Activated T-helper 1 cell treated with anti-CD3 and anti-CD28 coated beads, Interleukin-12 subunit alpha, Interleukin-12 subunit beta, Interleukin-2, Interleukin-4 antibody, amounts not matched to agents 30 ng/mL and 10 ng/mL and 1 ng/mL, durations not matched to agents 14 hours and 24 hours and 36 hours (primary cell): ENCODE measurements at regions of chr1 and their contacts with region 1.

Region 1: DNA sequence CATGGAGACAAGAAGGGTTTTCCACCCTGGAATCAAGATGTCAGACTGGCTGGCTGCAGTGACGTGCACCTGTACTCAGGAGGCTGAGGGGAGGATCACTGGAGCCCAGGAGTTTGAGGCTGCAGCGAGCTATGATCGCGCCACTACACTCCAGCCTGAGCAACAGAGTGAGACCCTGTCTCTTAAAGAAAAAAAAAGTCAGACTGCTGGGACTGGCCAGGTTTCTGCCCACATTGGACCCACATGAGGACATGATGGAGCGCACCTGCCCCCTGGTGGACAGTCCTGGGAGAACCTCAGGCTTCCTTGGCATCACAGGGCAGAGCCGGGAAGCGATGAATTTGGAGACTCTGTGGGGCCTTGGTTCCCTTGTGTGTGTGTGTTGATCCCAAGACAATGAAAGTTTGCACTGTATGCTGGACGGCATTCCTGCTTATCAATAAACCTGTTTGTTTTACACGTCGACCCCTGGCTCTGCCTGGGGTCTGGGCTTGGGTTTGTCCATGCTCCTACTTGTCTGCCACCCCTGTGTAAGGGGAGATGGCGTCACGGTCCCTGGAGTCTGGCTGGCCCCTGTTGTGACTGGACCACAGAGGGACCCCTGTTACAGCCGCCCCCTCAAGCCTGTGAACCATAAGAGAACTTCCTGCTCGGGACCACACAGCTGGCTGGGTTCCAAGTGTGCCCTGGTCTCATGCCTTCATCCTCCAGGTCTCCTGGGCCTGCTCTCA is 20.9 kb upstream of the VPS13D start:
- DNase-seq: peak; percentile 65
- H3K4me3 Mint-ChIP-seq: no peak overlapping the region
- H3K27ac Mint-ChIP-seq: peak overlapping the region; percentile 79
- H3K4me1 Mint-ChIP-seq: peaks cover 40% of the 10 kb centered on the region
- H3K27me3 Mint-ChIP-seq: peaks cover 3% of the 10 kb centered on the region

Region 2: DNA sequence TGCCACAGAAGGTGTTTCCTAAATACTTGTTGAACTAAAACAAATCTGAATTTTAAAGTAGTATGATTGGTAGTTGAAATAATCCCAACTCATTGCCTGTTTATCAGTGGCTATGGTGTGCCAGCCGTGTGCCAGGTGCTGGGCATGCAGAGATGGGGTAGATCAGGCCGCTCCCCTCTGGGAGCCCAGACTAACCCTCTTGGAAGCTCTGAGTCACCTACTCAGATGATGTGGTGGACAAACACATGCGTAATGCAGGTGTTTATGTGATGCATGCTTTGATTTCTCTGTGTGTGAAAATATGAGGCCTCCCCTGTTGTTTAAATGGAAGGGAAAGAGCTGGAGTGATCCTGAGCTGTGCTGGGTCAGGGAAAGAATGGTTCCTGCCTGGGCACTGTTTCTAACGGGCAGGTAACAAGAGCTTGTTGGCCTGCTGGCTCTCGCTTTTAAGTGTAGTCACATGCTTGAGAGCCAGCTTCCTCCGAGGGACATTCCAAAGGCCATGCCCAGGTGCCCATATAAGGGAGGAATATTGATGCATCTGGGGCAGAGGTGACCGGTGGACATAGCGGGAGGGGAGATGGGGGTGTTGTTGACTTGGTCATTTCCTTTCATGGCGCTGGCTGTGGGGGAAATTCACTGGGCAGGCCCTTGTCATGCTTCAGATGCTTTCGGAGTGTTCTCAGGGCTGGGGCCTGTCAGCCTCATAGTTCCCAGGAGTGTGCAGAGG is 218.5 kb before region 1 on chr1:
- intact Hi-C with region 1: no loop called
- DNase-seq: no peak
- H3K4me3 Mint-ChIP-seq: no peak overlapping the region
- H3K27ac Mint-ChIP-seq: no peak overlapping the region
- H3K4me1 Mint-ChIP-seq: peaks cover 22% of the 10 kb centered on the region
- H3K27me3 Mint-ChIP-seq: no peaks in the 10 kb centered on the region

Region 3: DNA sequence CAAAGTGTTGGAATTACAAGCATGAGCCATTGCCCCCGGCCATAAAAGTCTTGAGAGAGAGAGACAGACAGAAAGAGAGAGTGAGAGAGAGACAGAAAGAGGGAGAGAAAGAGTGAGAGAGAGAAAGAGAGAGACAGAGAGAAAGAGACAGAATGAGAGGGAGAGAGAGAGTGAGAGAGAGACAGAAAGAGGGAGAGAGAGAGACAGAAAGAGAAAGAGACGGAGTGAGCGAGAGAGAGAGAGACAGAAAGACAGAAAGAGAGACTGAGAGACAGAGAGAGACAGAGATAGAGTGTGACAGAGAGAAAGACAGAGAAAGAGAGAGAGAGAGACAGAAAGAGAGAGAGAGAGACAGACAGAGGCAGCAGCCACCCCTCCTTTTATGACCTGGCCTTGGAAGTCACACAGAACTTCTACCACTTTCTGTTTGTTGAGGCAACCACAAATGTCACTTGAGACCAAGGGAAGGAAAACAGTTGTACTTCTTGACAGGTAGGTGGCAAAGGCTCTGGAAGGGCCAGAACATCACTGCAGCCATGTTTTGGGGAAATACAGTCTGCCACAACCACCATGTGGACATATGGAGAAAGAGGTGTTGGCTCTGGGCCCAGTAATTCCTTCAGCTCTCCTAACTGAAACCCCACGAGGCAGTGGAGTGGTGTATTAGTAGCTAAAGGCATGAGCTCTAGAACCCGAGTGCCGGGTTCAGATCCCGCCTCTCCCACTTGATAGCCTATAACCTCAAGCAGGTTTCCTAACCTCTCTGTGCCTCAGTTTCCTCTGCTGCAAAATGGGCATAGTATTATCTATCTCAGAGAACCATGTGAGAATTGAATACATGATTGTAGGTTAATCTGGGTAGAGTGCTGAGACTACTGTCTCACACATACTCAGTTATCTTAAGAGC is 95.2 kb before region 1 on chr1:
- intact Hi-C with region 1: loop called (anchors 1 kb)
- DNase-seq: peak; percentile 15
- H3K4me3 Mint-ChIP-seq: peak overlapping the region; percentile 40
- H3K27ac Mint-ChIP-seq: peak overlapping the region; percentile 87
- H3K4me1 Mint-ChIP-seq: peaks cover 23% of the 10 kb centered on the region
- H3K27me3 Mint-ChIP-seq: peaks cover 2% of the 10 kb centered on the region

Region 4: DNA sequence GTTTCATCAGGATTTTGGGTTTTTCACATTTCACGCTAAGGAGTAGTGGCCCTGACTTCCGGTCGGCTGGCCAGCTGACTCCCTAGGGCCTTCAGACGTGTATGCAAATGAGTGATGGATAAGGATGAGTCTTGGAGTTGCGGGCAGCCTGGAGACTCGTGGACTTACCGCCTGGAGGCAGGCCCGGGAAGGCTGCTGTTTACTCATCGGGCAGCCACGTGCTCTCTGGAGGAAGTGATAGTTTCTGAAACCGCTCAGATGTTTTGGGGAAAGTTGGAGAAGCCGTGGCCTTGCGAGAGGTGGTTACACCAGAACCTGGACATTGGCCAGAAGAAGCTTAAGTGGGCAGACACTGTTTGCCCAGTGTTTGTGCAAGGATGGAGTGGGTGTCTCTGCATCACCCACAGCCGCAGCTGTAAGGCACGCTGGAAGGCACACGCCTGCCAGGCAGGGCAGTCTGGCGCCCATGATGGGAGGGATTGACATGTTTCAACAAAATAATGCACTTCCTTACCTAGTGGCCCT is 65.2 kb before region 1 on chr1:
- intact Hi-C with region 1: no loop called
- DNase-seq: no peak
- H3K4me3 Mint-ChIP-seq: peak overlapping the region; percentile 43
- H3K27ac Mint-ChIP-seq: peak overlapping the region; percentile 63
- H3K4me1 Mint-ChIP-seq: peaks cover 51% of the 10 kb centered on the region
- H3K27me3 Mint-ChIP-seq: no peaks in the 10 kb centered on the region

Region 5: DNA sequence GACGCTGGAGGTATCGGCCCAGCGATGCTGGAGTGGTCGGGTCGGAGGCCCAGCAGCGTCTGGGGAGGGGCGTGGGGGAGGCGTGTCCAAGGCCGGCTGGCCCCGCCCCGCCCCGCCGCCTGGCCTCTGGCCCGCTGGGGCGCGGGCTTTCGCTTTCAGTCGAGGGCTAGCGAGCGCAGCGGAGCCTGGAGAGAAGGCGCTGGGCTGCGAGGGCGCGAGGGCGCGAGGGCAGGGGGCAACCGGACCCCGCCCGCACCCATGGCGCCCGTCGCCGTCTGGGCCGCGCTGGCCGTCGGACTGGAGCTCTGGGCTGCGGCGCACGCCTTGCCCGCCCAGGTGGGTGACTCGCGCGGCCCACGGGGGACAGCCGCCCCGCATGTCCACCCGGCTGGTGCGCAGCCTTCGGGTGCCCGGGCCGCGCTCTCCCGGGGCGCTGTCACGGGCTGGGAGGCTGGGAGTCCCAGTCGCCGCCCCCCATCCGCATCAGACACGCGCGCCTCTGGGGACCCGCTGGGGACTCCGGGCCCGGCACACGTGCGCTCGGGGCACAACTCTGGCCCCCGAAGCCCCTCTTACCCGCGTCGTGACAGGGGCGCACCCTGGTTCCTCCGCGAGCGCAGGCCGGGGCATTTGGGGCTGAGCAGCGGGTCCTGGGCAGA is 42.0 kb before region 1 on chr1 and contains the start of gene TNFRSF1B:
- intact Hi-C with region 1: loop called (anchors 2 kb)
- DNase-seq: peak; percentile 74
- H3K4me3 Mint-ChIP-seq: peak within 1 kb of the TSS; percentile 100
- H3K27ac Mint-ChIP-seq: peak within 1 kb of the TSS; percentile 99
- H3K4me1 Mint-ChIP-seq: peaks cover 85% of the 10 kb centered on the region
- H3K27me3 Mint-ChIP-seq: no peaks in the 10 kb centered on the region
- total RNA-seq, gene TNFRSF1B: 211 and 213 TPM in 2 replicates

Region 6: DNA sequence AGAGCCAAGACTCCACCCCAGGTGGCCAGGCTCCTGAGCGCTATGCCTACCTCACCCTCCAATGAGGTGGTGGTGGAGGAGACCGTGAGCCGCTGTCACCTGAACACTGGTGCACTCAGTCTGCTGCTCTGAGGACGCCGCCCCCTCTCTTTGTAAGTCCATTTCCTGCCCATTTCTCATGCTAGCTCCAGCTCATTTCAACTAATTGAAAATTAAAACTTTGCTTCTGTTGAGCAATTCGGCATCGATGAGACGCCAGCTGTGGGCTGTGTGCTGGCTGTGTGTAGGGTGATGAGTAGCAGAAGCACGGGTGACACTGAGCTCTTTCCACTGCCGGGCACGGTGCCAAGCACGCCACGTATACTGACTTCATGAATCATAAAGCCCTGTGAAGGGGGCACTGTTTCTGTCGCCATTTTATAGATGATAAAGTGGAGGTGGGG is 30.9 kb before region 1 on chr1:
- intact Hi-C with region 1: loop called (anchors 1 kb)
- DNase-seq: peak; percentile 62
- H3K4me3 Mint-ChIP-seq: peak overlapping the region; percentile 79
- H3K27ac Mint-ChIP-seq: peak overlapping the region; percentile 96
- H3K4me1 Mint-ChIP-seq: peaks cover 84% of the 10 kb centered on the region
- H3K27me3 Mint-ChIP-seq: no peaks in the 10 kb centered on the region

Region 7: GRCh38 chr1:12196641-12197482 is 12.1 kb before region 1 on chr1:
- intact Hi-C with region 1: no loop called
- DNase-seq: no peak
- H3K4me3 Mint-ChIP-seq: no peak overlapping the region
- H3K27ac Mint-ChIP-seq: peak overlapping the region; percentile 48
- H3K4me1 Mint-ChIP-seq: peaks cover 38% of the 10 kb centered on the region
- H3K27me3 Mint-ChIP-seq: no peaks in the 10 kb centered on the region